ENCODE measurements at regions of chr7 and their contacts with region 1.

Region 1: DNA sequence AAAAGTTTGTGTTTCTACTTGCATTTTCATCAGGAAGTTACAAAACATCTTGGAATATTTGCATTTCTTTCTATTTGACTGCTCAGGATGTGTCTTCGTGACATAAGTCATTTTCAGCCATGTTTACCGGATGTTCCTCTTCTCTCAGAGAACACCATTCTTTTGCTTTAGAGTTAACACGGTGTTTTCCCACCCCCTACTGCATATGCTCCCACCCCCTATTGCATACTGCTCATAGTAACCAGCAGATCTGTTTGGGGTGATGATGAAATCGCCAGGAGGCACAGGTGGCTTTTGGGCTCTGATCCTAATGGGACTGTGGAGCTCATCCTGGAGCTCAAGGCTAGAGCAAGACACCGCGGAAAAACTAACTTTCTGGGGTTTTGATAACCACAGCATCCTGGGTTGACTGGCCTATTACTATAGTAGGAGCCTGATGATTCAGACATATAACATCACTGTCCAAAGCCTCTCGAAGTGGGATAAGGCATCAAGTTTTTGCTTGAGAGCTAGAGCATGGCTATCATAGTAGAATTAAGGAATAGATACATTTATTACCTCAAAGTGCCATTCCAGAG is 65.1 kb upstream of the BET1 start:
- DNase-seq: peak; percentile 21
- ATAC-seq: peak; percentile 56
- H3K4me3 ChIP-seq: no peak overlapping the region
- H3K27ac ChIP-seq: no peak overlapping the region
- H3K4me1 ChIP-seq: peaks cover 13% of the 10 kb centered on the region
- H3K27me3 ChIP-seq: no peaks in the 10 kb centered on the region
- CTCF ChIP-seq: no peak
- EP300 ChIP-seq: no peak
- POLR2A ChIP-seq: no peak
- RAD21 ChIP-seq: no peak

Region 2: DNA sequence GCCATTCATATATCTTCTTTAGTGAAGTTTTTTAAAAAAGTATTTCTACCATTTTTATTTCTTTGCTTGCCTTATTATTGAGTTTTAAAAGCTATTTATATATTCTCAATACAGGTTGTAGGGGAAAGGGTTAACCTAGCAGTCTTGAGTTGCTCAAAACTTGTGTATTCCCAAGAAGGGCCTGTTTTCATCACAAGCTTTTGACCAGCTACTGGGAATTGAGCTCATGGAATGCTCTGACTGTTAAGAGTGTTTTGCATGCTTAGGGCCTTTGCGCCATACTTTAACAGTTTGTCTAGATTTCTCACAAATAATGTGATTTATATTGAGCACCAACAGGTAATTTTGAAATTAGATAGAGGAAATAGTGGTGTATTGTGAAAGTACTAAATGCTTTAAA is 422.7 kb before region 1 on chr7:
- CTCF ChIA-PET with region 1: no interaction called
- POLR2A ChIA-PET with region 1: no interaction called
- RAD21 ChIA-PET with region 1: no interaction called
- SMC1A ChIA-PET with region 1: no interaction called
- in situ Hi-C with region 1: no loop called
- intact Hi-C with region 1: no loop called
- DNase-seq: no peak
- ATAC-seq: no peak
- H3K4me3 ChIP-seq: no peak overlapping the region
- H3K27ac ChIP-seq: no peak overlapping the region
- H3K4me1 ChIP-seq: no peaks in the 10 kb centered on the region
- H3K27me3 ChIP-seq: no peaks in the 10 kb centered on the region
- CTCF ChIP-seq: no peak
- EP300 ChIP-seq: no peak
- POLR2A ChIP-seq: no peak
- RAD21 ChIP-seq: no peak

Region 3: DNA sequence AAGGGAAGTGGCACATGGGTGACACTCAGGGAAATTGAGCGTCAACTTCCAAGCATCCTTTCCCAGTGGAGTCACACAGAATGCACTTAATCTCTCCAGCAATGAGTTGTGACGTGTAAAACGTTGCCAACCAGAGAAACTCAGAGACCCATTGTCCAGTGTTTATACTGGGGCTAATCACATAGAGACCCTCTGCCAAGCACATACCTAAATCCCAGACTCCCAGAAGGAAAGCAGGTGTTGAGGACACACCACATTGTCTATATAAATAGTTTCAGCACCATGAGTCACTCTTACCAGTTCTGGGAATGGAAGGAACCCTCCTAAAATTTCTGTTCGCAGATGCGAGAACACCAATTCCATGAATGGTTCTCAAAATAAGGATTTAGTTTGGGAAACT is 11.3 kb after region 1 on chr7:
- CTCF ChIA-PET with region 1: interaction called, 23 read pairs
- POLR2A ChIA-PET with region 1: no interaction called
- RAD21 ChIA-PET with region 1: interaction called, 3 read pairs
- SMC1A ChIA-PET with region 1: interaction called, 10 read pairs
- in situ Hi-C with region 1: no loop called
- intact Hi-C with region 1: no loop called
- DNase-seq: no peak
- ATAC-seq: no peak
- H3K4me3 ChIP-seq: no peak overlapping the region
- H3K27ac ChIP-seq: no peak overlapping the region
- H3K4me1 ChIP-seq: no peaks in the 10 kb centered on the region
- H3K27me3 ChIP-seq: no peaks in the 10 kb centered on the region
- CTCF ChIP-seq: no peak
- EP300 ChIP-seq: no peak
- POLR2A ChIP-seq: no peak
- RAD21 ChIP-seq: no peak

Measured in GM12878 (cell line).